ENCODE measurements at regions of chr18 and their contacts with region 1.

Region 1: GRCh38 chr18:72826736-72827135 is 41.1 kb downstream of the NETO1 start:
- DNase-seq: no peak
- ATAC-seq: no peak
- H3K4me3 ChIP-seq: no peak overlapping the region
- H3K4me3 Mint-ChIP-seq: no peak overlapping the region
- H3K27ac ChIP-seq: no peak overlapping the region
- H3K27ac Mint-ChIP-seq: no peak overlapping the region
- H3K4me1 ChIP-seq: no peaks in the 10 kb centered on the region
- H3K4me1 Mint-ChIP-seq: no peaks in the 10 kb centered on the region
- H3K27me3 ChIP-seq: no peaks in the 10 kb centered on the region
- H3K27me3 Mint-ChIP-seq: no peaks in the 10 kb centered on the region
- CTCF ChIP-seq: no peak

Region 2: GRCh38 chr18:71523483-71524435 is 1303.0 kb before region 1 on chr18:
- CTCF ChIA-PET with region 1: no interaction called
- POLR2A ChIA-PET with region 1: no interaction called
- intact Hi-C with region 1: no loop called
- DNase-seq: no peak
- ATAC-seq: no peak
- H3K4me3 ChIP-seq: no peak overlapping the region
- H3K4me3 Mint-ChIP-seq: no peak overlapping the region
- H3K27ac ChIP-seq: no peak overlapping the region
- H3K27ac Mint-ChIP-seq: no peak overlapping the region
- H3K4me1 ChIP-seq: no peaks in the 10 kb centered on the region
- H3K4me1 Mint-ChIP-seq: no peaks in the 10 kb centered on the region
- H3K27me3 ChIP-seq: no peaks in the 10 kb centered on the region
- H3K27me3 Mint-ChIP-seq: no peaks in the 10 kb centered on the region
- CTCF ChIP-seq: no peak

Region 3: DNA sequence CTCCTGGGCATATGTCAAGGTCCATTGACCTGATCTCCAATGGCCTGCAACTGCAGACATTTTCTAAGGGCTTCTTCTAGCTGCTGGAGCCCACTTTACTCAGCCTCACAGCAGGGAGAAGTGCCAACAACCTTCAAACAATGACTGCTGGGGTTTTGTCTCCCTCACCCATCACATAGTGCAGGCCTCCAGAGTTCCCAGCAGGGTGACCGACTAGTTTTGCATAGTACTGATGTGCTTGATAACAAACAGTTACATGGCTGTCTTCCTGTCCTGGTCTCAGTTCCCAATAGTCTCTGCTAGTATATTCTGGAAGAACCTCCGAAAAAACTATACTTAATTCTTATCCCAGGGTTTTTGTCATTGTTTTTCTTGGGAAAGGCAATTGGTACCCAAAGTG is 51.4 kb after region 1 on chr18:
- CTCF ChIA-PET with region 1: no interaction called
- POLR2A ChIA-PET with region 1: no interaction called
- intact Hi-C with region 1: loop called in 1 of 2 experiments (anchors 10 kb)
- DNase-seq: no peak
- ATAC-seq: no peak
- H3K4me3 ChIP-seq: no peak overlapping the region
- H3K4me3 Mint-ChIP-seq: no peak overlapping the region
- H3K27ac ChIP-seq: no peak overlapping the region
- H3K27ac Mint-ChIP-seq: no peak overlapping the region
- H3K4me1 ChIP-seq: no peaks in the 10 kb centered on the region
- H3K4me1 Mint-ChIP-seq: no peaks in the 10 kb centered on the region
- H3K27me3 ChIP-seq: no peaks in the 10 kb centered on the region
- H3K27me3 Mint-ChIP-seq: no peaks in the 10 kb centered on the region
- CTCF ChIP-seq: no peak

Measured in CD4-positive, alpha-beta T cell (primary cell).